ENCODE measurements at regions of chr9 and their contacts with region 1.

Region 1: GRCh38 chr9:3525836-3526164 is at the start of gene RFX3:
- DNase-seq: peak; percentile 94
- H3K4me3 Mint-ChIP-seq: peak within 1 kb of the TSS; percentile 93
- H3K27ac Mint-ChIP-seq: peak within 1 kb of the TSS; percentile 100
- H3K4me1 Mint-ChIP-seq: peaks cover 34% of the 10 kb centered on the region
- H3K27me3 Mint-ChIP-seq: no peaks in the 10 kb centered on the region
- total RNA-seq, gene RFX3: 11.0 to 12.7 TPM

Region 2: GRCh38 chr9:2014696-2015580 is 1510.9 kb before region 1 on chr9 and contains the start of gene SMARCA2:
- CTCF ChIA-PET with region 1: no interaction called
- intact Hi-C with region 1: loop called (anchors 1 kb)
- DNase-seq: peak; percentile 97
- H3K4me3 Mint-ChIP-seq: peak within 1 kb of the TSS; percentile 92
- H3K27ac Mint-ChIP-seq: peak within 1 kb of the TSS; percentile 99
- H3K4me1 Mint-ChIP-seq: peaks cover 44% of the 10 kb centered on the region
- H3K27me3 Mint-ChIP-seq: no peaks in the 10 kb centered on the region
- total RNA-seq, gene SMARCA2: 87.8 to 89.9 TPM

Region 3: DNA sequence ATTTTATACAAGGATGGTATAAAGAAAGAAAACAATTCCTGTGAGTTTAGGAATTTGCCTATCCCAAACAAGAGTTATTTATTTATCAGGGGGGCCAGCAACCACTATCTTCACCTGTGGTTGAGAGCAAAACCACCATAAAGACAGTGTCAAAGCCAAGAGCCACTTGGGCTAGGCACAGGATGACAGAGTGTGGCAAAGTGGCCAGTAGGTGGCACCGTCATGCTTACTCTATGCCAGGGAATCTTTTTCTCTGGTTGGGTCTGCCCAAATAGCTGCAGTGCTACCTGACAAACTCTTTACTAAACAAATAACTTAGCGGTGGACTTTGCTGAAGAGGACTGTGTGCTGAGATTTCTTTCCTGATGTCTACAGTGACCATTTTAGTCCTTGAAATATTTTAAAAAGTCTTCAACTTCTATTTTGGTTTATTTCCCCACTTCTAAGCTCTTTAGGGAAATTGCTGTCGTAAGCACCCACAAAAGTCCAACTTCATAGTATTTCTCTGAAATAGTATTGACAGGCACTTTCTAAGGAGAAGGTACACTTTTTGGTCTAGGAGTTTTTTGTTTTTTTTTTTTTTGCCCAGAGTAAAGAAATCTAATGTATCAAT is 285.0 kb before region 1 on chr9:
- CTCF ChIA-PET with region 1: no interaction called
- intact Hi-C with region 1: loop called (anchors 2 kb)
- DNase-seq: peak; percentile 85
- H3K4me3 Mint-ChIP-seq: no peak overlapping the region
- H3K27ac Mint-ChIP-seq: no peak overlapping the region
- H3K4me1 Mint-ChIP-seq: peaks cover 7% of the 10 kb centered on the region
- H3K27me3 Mint-ChIP-seq: no peaks in the 10 kb centered on the region

Region 4: DNA sequence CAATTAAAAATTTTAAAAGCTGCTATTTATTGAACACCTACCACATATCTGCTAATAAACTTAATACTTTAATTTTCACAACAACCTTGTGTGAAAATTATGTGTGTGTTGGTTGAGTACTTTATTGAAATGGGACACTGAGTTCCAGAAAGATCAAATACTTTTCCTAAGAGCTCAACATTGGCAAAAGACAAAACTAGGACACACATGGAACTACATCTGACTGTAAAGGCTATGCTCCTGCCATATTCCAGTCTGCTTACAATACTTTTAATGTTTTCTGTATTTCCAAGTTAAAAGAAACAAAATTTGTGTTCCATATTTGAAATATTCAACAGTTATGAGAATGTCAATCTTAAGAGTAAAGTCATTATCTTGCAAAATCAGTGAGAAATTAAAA is 111.8 kb before region 1 on chr9:
- CTCF ChIA-PET with region 1: no interaction called
- intact Hi-C with region 1: no loop called
- DNase-seq: no peak
- H3K4me3 Mint-ChIP-seq: no peak overlapping the region
- H3K27ac Mint-ChIP-seq: no peak overlapping the region
- H3K4me1 Mint-ChIP-seq: no peaks in the 10 kb centered on the region
- H3K27me3 Mint-ChIP-seq: no peaks in the 10 kb centered on the region

Region 5: GRCh38 chr9:3478549-3478953 is 47.2 kb before region 1 on chr9:
- CTCF ChIA-PET with region 1: interaction called, 14 read pairs
- intact Hi-C with region 1: loop called (anchors 1 kb)
- DNase-seq: peak; percentile 50
- H3K4me3 Mint-ChIP-seq: peak overlapping the region; percentile 43
- H3K27ac Mint-ChIP-seq: peak overlapping the region; percentile 83
- H3K4me1 Mint-ChIP-seq: peaks cover 72% of the 10 kb centered on the region
- H3K27me3 Mint-ChIP-seq: no peaks in the 10 kb centered on the region

Region 6: DNA sequence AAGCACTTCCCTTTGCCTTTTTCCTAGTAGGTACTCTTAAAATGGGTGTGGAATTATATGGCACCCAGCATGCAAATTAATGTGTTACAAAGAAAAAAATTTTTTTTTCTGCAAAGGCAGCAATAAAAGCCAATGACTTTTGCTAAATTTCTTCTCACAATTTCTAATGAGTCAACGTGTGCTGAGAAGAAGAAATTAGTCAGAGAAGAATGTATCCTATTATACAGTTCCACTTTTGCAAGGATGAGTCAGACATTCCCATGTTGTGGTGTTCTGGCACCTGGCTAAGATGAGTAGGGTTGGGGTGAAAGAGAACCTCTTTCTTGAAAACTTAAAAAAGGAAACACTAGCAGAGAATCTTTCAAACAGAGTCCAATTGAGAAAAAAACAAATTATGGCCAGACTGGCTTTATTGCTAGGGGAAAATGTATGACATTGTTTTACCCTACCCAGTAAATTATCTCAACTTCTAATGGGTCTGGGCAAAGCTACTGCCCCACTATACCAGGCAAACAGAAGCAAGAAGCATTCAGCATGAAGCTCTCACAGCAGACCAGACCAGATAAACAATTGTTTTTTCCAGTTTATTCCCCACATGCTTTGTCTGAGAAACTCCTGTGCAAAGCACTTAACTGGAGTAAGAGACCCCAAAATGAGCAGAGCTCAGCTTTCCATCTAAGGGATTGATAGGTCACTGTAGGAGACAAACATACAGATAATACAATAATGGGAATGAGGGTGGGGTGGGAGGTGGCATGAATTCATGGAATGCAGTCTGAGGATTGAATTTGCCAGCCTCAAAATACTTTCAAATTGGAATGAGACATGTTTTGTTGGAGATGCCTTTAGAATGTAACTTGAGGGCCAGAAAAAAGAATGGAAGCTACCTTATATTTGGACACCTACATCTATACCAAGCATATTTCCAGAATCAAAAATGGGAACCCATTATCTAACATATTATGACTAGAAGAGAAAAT is 220.8 kb after region 1 on chr9:
- CTCF ChIA-PET with region 1: no interaction called
- intact Hi-C with region 1: loop called (anchors 1 kb)
- DNase-seq: peak; percentile 79
- H3K4me3 Mint-ChIP-seq: no peak overlapping the region
- H3K27ac Mint-ChIP-seq: peak overlapping the region; percentile 71
- H3K4me1 Mint-ChIP-seq: peaks cover 46% of the 10 kb centered on the region
- H3K27me3 Mint-ChIP-seq: peaks cover 5% of the 10 kb centered on the region

Region 7: GRCh38 chr9:4662108-4662988 is 1136.5 kb after region 1 on chr9 and contains the start of gene PLPP6:
- CTCF ChIA-PET with region 1: no interaction called
- intact Hi-C with region 1: loop called (anchors 2 kb)
- DNase-seq: peak; percentile 91
- H3K4me3 Mint-ChIP-seq: peak within 1 kb of the TSS; percentile 87
- H3K27ac Mint-ChIP-seq: peak within 1 kb of the TSS; percentile 77
- H3K4me1 Mint-ChIP-seq: peaks cover 52% of the 10 kb centered on the region
- H3K27me3 Mint-ChIP-seq: no peaks in the 10 kb centered on the region
- total RNA-seq, gene PLPP6: 4.6 to 5.3 TPM

Region 8: DNA sequence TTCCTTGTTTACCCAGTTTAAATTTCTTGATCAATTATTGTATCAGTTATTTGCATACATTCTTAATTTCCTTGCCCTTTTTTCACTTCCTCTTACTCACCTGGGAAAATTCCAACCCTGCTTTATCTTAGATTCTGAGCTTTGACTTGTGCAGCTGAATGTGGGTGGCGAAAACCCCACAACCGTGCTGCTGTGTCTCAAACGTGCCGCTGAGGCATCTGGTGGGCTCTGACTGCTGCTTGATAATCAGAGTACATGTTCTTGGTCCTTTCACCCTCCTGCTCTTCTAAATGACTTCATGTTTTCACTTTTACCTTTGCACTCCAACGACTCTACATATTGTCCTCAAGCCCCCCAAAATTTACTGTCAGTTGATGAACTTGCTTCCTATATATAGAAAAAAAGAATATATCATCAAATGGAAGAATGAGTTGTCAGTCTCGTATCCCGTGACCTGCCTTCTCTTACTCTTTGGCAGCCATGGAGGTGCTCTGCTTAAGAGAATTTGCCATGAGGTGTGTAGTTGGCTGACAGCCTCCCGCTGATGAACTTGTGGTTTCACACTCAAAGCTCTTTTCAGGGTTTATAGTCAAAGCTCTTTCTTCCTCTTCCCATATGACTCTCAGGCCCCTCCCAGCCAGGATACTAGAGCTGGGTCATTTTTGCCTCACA is 1445.3 kb after region 1 on chr9:
- CTCF ChIA-PET with region 1: no interaction called
- intact Hi-C with region 1: loop called (anchors 1 kb)
- DNase-seq: peak; percentile 91
- H3K4me3 Mint-ChIP-seq: no peak overlapping the region
- H3K27ac Mint-ChIP-seq: no peak overlapping the region
- H3K4me1 Mint-ChIP-seq: peaks cover 23% of the 10 kb centered on the region
- H3K27me3 Mint-ChIP-seq: no peaks in the 10 kb centered on the region

Measured in activated naive CD4-positive, alpha-beta T cell treated with anti-CD3 and anti-CD28 coated beads for 36 hours (primary cell).